OCI-LY7 (cell line): ENCODE measurements at regions of chr6 and their contacts with region 1.

Region 1: DNA sequence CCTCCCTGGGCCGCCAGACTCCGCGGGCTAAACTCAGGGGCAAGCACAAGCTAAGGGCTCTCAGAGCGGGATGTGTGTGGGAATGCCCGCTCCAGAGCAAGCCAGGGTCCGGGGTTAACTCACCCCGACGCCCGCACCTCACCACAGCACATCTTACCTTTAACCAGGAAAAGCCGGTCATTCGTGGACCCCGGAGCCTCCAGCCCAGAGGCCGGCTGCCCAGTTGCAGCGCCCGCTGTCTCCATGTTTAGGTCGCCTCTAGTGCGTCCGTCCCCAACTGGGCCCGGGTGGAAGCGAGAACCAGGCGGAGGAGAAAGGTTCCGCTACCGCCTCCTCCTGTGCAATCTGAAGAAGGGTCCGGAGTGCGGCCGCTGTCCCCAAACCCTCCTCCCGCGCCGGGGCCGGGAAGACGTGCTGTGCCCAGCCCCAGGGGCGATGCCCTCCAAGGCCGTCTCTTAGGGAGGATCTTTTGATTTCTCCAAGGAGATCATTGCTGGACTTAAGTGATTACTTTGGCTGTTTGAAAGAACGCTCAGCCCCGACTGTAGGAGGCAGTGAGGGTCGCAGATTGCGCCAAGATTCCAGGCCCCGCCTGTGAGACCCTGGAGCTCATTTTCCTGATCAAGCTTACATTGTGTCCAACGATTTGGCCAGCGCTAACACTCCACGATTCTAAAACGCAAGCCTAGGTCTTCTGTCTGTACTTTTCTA is at the start of gene TMEM242:
- DNase-seq: peak; percentile 91
- H3K4me3 ChIP-seq: peak within 1 kb of the TSS; percentile 77
- H3K27ac ChIP-seq: peak within 1 kb of the TSS; percentile 6
- H3K4me1 ChIP-seq: peaks cover 14% of the 10 kb centered on the region
- CTCF ChIP-seq: peak; percentile 27; the same call in 1 of the 2 replicates
- total RNA-seq, gene TMEM242: 4.5 and 8.2 TPM in 2 replicates

Region 2: DNA sequence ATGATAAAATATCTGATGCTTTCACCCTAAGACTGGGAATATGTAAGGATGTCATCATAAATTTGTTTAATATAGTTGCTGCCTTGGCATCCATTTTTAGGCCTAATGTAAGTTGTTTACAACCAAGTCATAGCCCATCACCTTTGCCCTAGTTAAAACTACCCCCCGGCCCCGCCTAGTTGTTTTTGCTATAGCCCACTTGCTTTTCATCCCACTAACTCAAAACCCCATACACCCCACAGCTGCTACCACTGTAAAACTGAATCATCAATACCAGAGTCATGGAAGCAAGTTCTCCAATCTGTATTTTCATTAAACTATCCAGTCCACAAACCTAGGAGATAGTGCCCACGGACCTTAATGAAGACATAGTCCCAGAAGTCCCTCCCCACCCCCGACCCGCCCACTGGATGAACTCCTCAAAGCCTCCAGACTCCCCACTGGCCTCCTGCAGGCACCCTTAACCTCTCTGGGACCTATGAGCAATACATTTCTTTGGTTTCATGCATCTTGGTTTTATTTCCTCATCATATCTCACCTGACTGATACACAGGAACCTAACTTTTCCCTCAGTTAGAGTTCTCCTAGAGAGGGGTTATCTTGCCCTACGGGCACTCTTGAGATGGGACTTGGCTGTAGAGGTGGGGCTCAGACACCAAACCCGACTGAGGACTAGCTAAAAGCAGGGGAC is 45.1 kb after region 1 on chr6:
- CTCF ChIA-PET with region 1: no interaction called
- POLR2A ChIA-PET with region 1: interaction called, 4 read pairs
- intact Hi-C with region 1: loop called (anchors 2 kb)
- DNase-seq: no peak
- H3K4me3 ChIP-seq: no peak overlapping the region
- H3K27ac ChIP-seq: no peak overlapping the region
- H3K4me1 ChIP-seq: peaks cover 21% of the 10 kb centered on the region
- CTCF ChIP-seq: no peak

Region 3: GRCh38 chr6:157571269-157571668 is 247.9 kb after region 1 on chr6:
- CTCF ChIA-PET with region 1: no interaction called
- POLR2A ChIA-PET with region 1: interaction called, 8 read pairs
- intact Hi-C with region 1: loop called (anchors 1 kb)
- DNase-seq: peak; percentile 91
- H3K4me3 ChIP-seq: peak overlapping the region; percentile 65
- H3K27ac ChIP-seq: peak overlapping the region; percentile 97
- H3K4me1 ChIP-seq: peaks cover 69% of the 10 kb centered on the region
- CTCF ChIP-seq: peak; percentile 42; the same call in 1 of the 2 replicates

Region 4: DNA sequence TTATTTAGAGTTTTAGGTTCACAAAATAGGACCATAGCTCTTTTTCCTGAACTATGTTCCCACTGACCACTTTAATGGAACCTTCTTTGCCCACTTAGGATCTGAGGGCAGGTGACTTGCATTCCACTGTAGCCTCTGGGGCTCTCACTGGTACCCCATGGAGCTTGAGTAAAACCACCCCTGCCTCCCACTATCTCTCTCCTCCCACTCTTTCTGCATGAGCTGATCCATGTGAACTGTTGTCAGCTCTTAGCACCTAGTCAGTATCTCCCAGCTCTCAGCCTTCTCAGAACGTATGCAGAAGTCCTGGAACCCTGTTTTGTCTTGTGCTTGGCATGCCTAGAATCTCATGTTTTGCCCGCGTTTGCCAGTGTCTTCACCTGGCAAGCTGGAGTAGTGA is 299.0 kb after region 1 on chr6:
- CTCF ChIA-PET with region 1: interaction called, 11 read pairs
- POLR2A ChIA-PET with region 1: no interaction called
- intact Hi-C with region 1: no loop called
- DNase-seq: no peak
- H3K4me3 ChIP-seq: no peak overlapping the region
- H3K27ac ChIP-seq: no peak overlapping the region
- H3K4me1 ChIP-seq: no peaks in the 10 kb centered on the region
- CTCF ChIP-seq: no peak

Region 5: GRCh38 chr6:157764178-157765033 is 441.0 kb after region 1 on chr6:
- CTCF ChIA-PET with region 1: no interaction called
- POLR2A ChIA-PET with region 1: interaction called, 4 read pairs
- intact Hi-C with region 1: loop called (anchors 10 kb)
- DNase-seq: peak; percentile 84
- H3K4me3 ChIP-seq: peak overlapping the region; percentile 53
- H3K27ac ChIP-seq: peak overlapping the region; percentile 50
- H3K4me1 ChIP-seq: peaks cover 58% of the 10 kb centered on the region
- CTCF ChIP-seq: no peak